ENCODE measurements at regions of chr18 and their contacts with region 1.

Region 1: DNA sequence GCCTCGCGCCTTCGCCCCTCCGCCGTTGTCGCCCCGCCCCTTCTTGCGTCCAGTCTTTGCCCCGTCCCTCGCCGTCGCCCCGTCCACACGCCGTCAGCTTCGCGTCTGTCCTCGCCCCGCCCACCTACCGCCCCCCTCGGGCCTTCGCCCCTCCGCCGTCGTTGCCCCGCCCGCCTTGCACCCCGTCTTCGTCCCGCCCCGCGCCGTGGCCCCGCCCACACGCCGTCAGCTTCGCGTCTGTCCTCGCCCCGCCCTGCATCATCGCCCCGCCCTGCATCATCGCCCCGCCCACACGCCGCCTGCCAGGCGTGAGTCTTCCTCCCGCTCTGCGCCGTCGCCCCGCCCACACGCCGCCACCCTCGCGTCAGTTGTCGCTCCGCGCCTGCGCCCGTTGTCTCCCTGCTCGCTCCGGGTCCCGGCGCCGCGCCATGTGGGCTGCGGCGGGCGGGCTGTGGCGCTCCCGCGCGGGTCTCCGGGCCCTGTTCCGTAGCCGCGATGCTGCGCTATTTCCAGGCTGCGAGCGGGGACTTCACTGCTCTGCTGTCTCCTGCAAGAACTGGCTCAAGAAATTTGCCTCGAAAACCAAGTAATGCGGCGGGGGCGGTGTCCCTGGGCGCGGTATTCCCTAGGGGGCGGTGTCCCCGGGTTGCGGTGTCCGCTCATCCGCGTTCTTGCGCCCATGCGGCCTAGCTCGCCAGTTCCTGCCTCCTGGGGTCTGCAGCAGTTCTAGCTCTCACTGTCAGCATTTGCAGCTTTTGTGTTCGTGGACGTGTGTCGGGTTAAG is at the start of gene RBFA:
- DNase-seq: peak; percentile 98
- ATAC-seq: peak; percentile 87
- H3K4me3 ChIP-seq: peak within 1 kb of the TSS; percentile 66
- H3K27ac ChIP-seq: peak within 1 kb of the TSS; percentile 74
- H3K4me1 ChIP-seq: peaks cover 3% of the 10 kb centered on the region; the same call in 1 of the 2 replicates
- H3K27me3 ChIP-seq: no peaks in the 10 kb centered on the region
- CTCF ChIP-seq: peak; percentile 45
- POLR2A ChIP-seq: peak; percentile 73; the same call in 1 of the 2 replicates
- RAD21 ChIP-seq: peak; percentile 25
- total RNA-seq, gene RBFA: 21.0 and 25.0 TPM in 2 replicates

Region 2: GRCh38 chr18:79698668-79699335 is 335.5 kb before region 1 on chr18:
- CTCF ChIA-PET with region 1: no interaction called
- POLR2A ChIA-PET with region 1: no interaction called
- dilution Hi-C with region 1: no loop called
- in situ Hi-C with region 1: no loop called
- intact Hi-C with region 1: loop called (anchors 10 kb)
- DNase-seq: peak; percentile 84
- ATAC-seq: peak; percentile 71
- H3K4me3 ChIP-seq: no peak overlapping the region
- H3K27ac ChIP-seq: no peak overlapping the region
- H3K4me1 ChIP-seq: peaks cover 14% of the 10 kb centered on the region
- H3K27me3 ChIP-seq: no peaks in the 10 kb centered on the region
- CTCF ChIP-seq: no peak
- POLR2A ChIP-seq: no peak
- RAD21 ChIP-seq: no peak

Region 3: GRCh38 chr18:79790996-79791972 is 243.0 kb before region 1 on chr18:
- CTCF ChIA-PET with region 1: no interaction called
- POLR2A ChIA-PET with region 1: no interaction called
- dilution Hi-C with region 1: no loop called
- in situ Hi-C with region 1: no loop called
- intact Hi-C with region 1: loop called (anchors 1 kb)
- DNase-seq: peak; percentile 99
- ATAC-seq: peak; percentile 87
- H3K4me3 ChIP-seq: peak overlapping the region; percentile 0; the same call in 1 of the 2 replicates
- H3K27ac ChIP-seq: peak overlapping the region; percentile 88
- H3K4me1 ChIP-seq: peaks cover 22% of the 10 kb centered on the region
- H3K27me3 ChIP-seq: peaks cover 19% of the 10 kb centered on the region
- CTCF ChIP-seq: no peak
- POLR2A ChIP-seq: no peak
- RAD21 ChIP-seq: no peak

Region 4: DNA sequence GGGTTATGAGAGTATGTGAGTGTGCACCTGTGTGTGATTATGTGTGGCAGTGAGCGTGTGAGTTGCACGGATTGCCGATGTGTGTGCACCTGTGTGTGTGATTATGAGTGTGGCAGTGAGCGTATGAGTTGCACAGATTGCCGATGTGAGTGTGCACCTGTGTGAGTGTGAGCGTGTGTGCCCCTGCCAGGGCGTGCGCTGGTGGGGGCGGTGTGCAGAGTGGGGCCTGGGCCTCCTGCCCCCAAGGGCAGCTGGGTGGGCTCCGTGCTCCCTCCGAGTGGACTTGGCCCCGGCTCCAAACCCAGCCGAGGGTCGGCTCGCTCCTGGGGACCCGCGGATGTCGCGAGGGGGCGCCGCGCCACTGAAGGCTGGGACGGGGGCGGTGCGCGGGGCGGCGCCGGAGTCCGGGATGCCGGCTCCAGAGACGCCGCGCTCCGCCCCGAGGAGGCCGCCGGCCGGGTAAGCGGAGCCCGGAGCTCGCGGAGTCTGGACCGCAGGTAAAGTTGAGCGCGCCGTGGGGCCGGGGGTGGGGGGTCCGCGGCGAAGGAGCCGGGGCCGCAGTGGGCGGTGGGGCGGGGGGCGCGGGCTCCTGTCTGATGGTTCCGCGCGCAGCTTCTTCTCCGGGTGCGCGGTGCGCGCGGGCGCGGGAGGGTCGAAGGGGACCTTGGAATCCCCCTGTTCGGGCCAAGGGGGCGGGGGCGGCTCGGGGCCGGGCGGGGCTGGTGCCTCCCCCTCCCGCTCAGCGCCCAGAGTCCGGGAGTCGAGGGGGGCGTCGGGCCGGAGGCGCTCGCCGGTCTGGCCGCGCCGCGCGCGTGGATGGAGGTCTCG is 236.5 kb before region 1 on chr18 and contains the start of gene KCNG2:
- CTCF ChIA-PET with region 1: no interaction called
- POLR2A ChIA-PET with region 1: no interaction called
- dilution Hi-C with region 1: no loop called
- in situ Hi-C with region 1: no loop called
- intact Hi-C with region 1: loop called (anchors 2 kb)
- DNase-seq: no peak
- ATAC-seq: peak; percentile 82
- H3K4me3 ChIP-seq: peak within 1 kb of the TSS; percentile 42
- H3K27ac ChIP-seq: no peak within 1 kb of the TSS
- H3K4me1 ChIP-seq: peaks cover 3% of the 10 kb centered on the region; the same call in 1 of the 2 replicates
- H3K27me3 ChIP-seq: peaks cover 30% of the 10 kb centered on the region
- CTCF ChIP-seq: peak; percentile 34
- POLR2A ChIP-seq: no peak
- RAD21 ChIP-seq: 0 out of 2 replicates have a peak, but pooled peaks have one; percentile 8
- total RNA-seq, gene KCNG2: not detected in 2 replicates

Region 5: DNA sequence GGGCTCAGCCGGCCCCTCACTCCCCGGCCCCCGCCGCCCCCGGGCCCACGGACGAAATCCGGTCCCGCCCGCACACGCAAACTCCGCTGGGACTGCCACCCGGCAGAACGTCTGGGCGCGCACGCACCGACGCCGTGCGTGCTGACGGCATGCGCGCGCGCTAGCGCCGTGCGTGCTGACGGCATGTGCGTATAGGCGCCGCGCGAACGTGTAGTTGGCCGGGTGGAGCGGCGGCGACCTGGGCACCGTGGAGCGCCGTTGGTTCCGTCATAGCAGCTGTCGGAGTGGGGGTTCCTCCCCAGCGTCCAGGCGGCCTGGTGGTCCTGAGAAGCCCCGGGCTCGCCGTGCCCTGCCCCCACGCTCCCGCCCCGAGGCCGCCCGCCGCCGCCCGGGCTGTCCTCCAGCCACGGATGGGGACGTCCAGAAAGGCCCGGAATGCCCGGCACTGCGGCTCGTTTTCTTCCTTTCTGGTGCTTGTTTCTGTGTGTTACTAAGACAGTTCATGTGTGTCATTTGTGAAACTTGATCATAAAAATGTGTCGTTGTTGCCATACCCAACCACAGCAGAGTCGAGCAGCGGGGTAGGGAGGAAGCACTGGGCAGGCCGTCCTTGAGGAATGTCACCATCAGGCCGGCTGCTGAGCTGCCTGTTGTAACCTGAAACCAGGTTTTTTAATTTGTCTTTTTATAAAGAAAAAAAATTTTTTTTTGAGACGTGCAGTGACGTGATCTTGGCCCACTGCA is 45.6 kb before region 1 on chr18 and contains the start of gene TXNL4A:
- CTCF ChIA-PET with region 1: no interaction called
- POLR2A ChIA-PET with region 1: no interaction called
- dilution Hi-C with region 1: no loop called
- in situ Hi-C with region 1: no loop called
- intact Hi-C with region 1: loop called (anchors 1 kb)
- DNase-seq: peak; percentile 89
- ATAC-seq: peak; percentile 95
- H3K4me3 ChIP-seq: peak within 1 kb of the TSS; percentile 85
- H3K27ac ChIP-seq: peak within 1 kb of the TSS; percentile 94
- H3K4me1 ChIP-seq: peaks cover 7% of the 10 kb centered on the region
- H3K27me3 ChIP-seq: no peaks in the 10 kb centered on the region
- CTCF ChIP-seq: no peak
- POLR2A ChIP-seq: peak; percentile 77
- RAD21 ChIP-seq: no peak
- total RNA-seq, gene TXNL4A: 38.7 and 72.8 TPM in 2 replicates

Region 6: GRCh38 chr18:80147418-80148325 is 113.4 kb after region 1 on chr18:
- CTCF ChIA-PET with region 1: no interaction called
- POLR2A ChIA-PET with region 1: no interaction called
- dilution Hi-C with region 1: no loop called
- in situ Hi-C with region 1: no loop called
- intact Hi-C with region 1: loop called (anchors 2 kb)
- DNase-seq: peak; percentile 72
- ATAC-seq: peak; percentile 82
- H3K4me3 ChIP-seq: peak overlapping the region; percentile 69
- H3K27ac ChIP-seq: peak overlapping the region; percentile 54
- H3K4me1 ChIP-seq: peaks cover 8% of the 10 kb centered on the region
- H3K27me3 ChIP-seq: no peaks in the 10 kb centered on the region
- CTCF ChIP-seq: no peak
- POLR2A ChIP-seq: no peak
- RAD21 ChIP-seq: no peak

Measured in IMR-90 (cell line).